ENCODE measurements at regions of chr4 and their contacts with region 1.

Region 1: DNA sequence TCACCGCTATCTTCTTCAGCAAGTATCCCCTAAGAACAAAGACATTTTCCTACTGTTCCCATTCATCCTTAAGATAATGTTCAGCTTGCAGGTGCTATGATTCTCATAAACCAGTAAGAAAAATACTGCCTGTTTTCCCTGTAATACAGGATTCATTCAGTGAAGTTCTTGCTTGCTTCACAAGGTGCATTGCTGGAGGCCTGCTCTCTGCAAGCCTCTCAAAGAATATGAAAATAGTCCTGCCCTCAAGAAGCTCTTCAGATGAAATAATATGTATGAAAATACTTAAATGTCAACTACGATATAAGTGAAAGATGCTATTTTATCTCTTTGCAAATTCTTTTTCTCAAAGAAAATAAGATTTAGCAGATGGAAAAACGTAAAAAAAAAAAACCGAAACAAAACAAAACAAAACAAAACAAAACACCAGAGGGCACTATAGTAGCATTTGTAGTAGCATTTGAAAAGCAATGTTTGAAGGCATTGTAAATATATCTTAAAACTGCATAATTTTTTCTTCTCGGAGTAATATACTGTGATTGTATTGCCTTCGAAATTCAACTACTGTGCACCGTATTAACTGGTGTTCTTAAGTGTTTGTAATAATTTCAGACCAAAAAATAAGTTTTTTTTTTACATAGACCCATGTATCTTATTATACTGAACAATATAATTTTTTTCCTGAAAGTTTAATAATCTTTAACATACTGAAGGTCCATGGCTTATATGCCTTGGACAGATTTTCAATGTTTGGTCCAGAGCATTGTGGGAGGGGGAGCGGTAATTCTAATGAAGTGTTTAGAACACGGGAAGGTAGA is 26.0 kb downstream of the ADH4 start:
- DNase-seq: no peak
- ATAC-seq: no peak
- H3K4me3 Mint-ChIP-seq: no peak overlapping the region
- H3K27ac Mint-ChIP-seq: no peak overlapping the region
- H3K4me1 Mint-ChIP-seq: no peaks in the 10 kb centered on the region
- H3K27me3 Mint-ChIP-seq: no peaks in the 10 kb centered on the region
- CTCF ChIP-seq: peak; percentile 57

Region 2: GRCh38 chr4:99405433-99406115 is 287.5 kb after region 1 on chr4:
- CTCF ChIA-PET with region 1: interaction called, 5 read pairs
- POLR2A ChIA-PET with region 1: no interaction called
- intact Hi-C with region 1: loop called (anchors 1 kb)
- DNase-seq: peak; percentile 69
- ATAC-seq: peak; percentile 72
- H3K4me3 Mint-ChIP-seq: no peak overlapping the region
- H3K27ac Mint-ChIP-seq: no peak overlapping the region
- H3K4me1 Mint-ChIP-seq: peaks cover 16% of the 10 kb centered on the region
- H3K27me3 Mint-ChIP-seq: no peaks in the 10 kb centered on the region
- CTCF ChIP-seq: peak; percentile 93